Prostate gland (tissue), 2 donors: ENCODE measurements at regions of chr12 and their contacts with region 1.

Region 1: DNA sequence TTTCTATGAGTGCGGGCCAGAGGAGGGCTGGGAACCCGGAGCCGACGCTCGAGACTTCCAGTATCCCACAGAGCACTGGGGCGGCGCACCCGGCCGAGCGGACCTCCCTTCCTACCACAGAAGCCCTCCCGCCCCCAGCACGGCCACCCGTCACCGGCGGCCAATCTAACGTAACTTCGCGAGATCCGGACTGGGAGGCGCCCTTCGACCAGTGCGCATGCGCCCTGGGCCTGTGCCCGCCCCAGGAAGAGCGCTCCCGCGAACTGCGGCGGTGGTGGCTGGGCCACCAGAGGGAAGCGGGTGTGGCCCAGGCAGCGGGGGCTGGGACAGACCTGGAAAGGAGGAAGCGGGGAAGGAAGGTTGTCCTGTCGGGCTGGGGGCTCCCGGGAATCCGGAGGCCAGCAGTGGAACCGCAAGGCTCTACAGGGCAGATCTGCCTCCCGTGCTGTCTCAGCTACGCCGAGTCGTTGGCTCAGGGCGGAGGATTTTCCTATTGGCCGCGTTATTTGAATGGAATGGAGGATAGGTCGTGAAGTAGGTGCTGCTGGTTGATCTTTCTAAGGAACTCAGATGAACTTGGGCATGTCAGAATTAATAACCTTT is at the start of gene PPP1R12A:
- DNase-seq: peak; percentile 94
- H3K4me3 ChIP-seq: peak within 1 kb of the TSS; percentile 92 to 94
- H3K27ac ChIP-seq: peak within 1 kb of the TSS; percentile 94 to 96
- H3K4me1 ChIP-seq: no peaks in the 10 kb centered on the region
- H3K27me3 ChIP-seq: no peaks in the 10 kb centered on the region
- CTCF ChIP-seq: peak in 2 of 4 experiments; percentile 41 to 49
- POLR2A ChIP-seq: peak; percentile 96
- total RNA-seq, gene PPP1R12A: 68.7 to 86.9 TPM

Region 2: DNA sequence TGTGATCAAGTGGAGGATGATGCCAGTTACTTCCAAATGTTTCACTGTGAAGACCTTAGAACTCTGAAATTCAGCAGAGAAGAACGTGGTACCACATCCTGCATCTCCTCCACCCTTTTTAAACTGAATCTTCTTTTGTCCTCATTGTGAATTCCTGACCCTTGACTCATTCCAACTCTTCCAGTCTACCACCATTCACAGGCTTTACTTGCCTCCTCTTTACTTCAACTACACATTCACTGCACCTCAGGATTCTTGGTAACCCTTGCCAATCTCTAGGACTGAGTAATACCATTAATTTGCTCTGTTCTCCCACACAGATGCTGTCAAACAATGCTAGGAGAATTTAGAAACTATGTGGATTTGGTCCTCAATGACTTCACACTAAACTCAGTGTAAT is 37.5 kb before region 1 on chr12:
- intact Hi-C with region 1: no loop called
- DNase-seq: no peak
- H3K4me3 ChIP-seq: no peak overlapping the region
- H3K27ac ChIP-seq: no peak overlapping the region
- H3K4me1 ChIP-seq: no peaks in the 10 kb centered on the region
- H3K27me3 ChIP-seq: no peaks in the 10 kb centered on the region
- CTCF ChIP-seq: no peak
- POLR2A ChIP-seq: no peak

Region 3: GRCh38 chr12:80033448-80033847 is 98.3 kb after region 1 on chr12:
- intact Hi-C with region 1: no loop called
- DNase-seq: no peak
- H3K4me3 ChIP-seq: no peak overlapping the region
- H3K27ac ChIP-seq: peak overlapping the region in 1 of 2 donors; percentile 29
- H3K4me1 ChIP-seq: peaks cover 3% of the 10 kb centered on the region
- H3K27me3 ChIP-seq: no peaks in the 10 kb centered on the region
- CTCF ChIP-seq: no peak
- POLR2A ChIP-seq: no peak

Region 4: GRCh38 chr12:80053048-80053790 is 118.1 kb after region 1 on chr12:
- intact Hi-C with region 1: loop called (anchors 5 kb)
- DNase-seq: peak; percentile 56
- H3K4me3 ChIP-seq: no peak overlapping the region
- H3K27ac ChIP-seq: peak overlapping the region; percentile 43 to 53
- H3K4me1 ChIP-seq: no peaks in the 10 kb centered on the region
- H3K27me3 ChIP-seq: no peaks in the 10 kb centered on the region
- CTCF ChIP-seq: no peak
- POLR2A ChIP-seq: no peak